Activated T-helper 1 cell treated with anti-CD3 and anti-CD28 coated beads, Interleukin-12 subunit alpha, Interleukin-12 subunit beta, Interleukin-2, Interleukin-4 antibody, amounts not matched to agents 30 ng/mL and 10 ng/mL and 1 ng/mL, durations not matched to agents 14 hours and 24 hours and 36 hours (primary cell): ENCODE measurements at regions of chr16 and their contacts with region 1.

Region 1: GRCh38 chr16:87297918-87298631 is 19.1 kb downstream of the C16orf95 start:
- DNase-seq: no peak
- H3K4me3 Mint-ChIP-seq: no peak overlapping the region
- H3K27ac Mint-ChIP-seq: no peak overlapping the region
- H3K4me1 Mint-ChIP-seq: peaks cover 15% of the 10 kb centered on the region
- H3K27me3 Mint-ChIP-seq: no peaks in the 10 kb centered on the region

Region 2: GRCh38 chr16:87086156-87086555 is 211.9 kb before region 1 on chr16:
- intact Hi-C with region 1: no loop called
- DNase-seq: no peak
- H3K4me3 Mint-ChIP-seq: no peak overlapping the region
- H3K27ac Mint-ChIP-seq: no peak overlapping the region
- H3K4me1 Mint-ChIP-seq: no peaks in the 10 kb centered on the region
- H3K27me3 Mint-ChIP-seq: peaks cover 3% of the 10 kb centered on the region

Region 3: DNA sequence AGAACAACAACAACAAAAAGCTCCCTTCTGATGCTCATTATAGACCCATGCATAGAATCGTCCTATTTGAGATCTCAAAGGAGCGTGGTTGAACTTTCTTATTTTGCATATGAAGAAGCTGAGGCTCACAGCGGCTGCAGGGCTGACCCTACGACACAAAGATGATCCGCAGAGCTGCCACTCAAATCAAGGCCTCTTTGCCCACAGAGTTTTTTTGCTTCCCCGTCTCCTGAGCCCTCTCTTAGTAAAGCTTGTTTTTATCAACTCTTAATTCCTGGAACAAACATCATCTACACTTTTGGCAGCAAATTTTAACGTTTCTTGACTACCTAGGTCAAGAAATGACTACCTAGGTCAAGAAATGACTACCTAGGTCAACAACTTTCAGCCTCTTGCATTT is 54.6 kb before region 1 on chr16:
- intact Hi-C with region 1: loop called (anchors 2 kb)
- DNase-seq: no peak
- H3K4me3 Mint-ChIP-seq: no peak overlapping the region
- H3K27ac Mint-ChIP-seq: peak overlapping the region; percentile 7
- H3K4me1 Mint-ChIP-seq: peaks cover 30% of the 10 kb centered on the region
- H3K27me3 Mint-ChIP-seq: peaks cover 2% of the 10 kb centered on the region

Region 4: DNA sequence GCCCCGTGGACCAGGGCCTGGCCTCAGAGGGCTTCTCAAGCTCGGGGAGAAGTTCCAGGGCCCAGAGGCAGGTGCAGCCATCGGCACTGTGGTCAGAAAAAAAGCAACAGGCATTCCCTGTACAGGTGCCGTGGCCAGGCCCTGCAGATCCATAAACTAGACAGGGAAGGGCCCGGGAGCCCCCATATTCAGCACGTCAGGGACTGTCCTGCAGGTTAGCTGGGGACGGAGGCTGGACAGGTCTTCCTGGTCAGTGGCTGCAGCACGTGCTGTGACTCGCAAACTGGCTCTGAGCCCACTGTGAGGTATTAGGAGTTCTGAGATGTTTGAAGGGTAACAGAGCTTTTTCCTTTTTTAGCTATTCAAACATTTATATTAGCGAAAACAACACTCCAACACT is 34.1 kb after region 1 on chr16:
- intact Hi-C with region 1: no loop called
- DNase-seq: no peak
- H3K4me3 Mint-ChIP-seq: no peak overlapping the region
- H3K27ac Mint-ChIP-seq: no peak overlapping the region
- H3K4me1 Mint-ChIP-seq: peaks cover 2% of the 10 kb centered on the region
- H3K27me3 Mint-ChIP-seq: no peaks in the 10 kb centered on the region